Spleen (tissue), 13 donors: ENCODE measurements at regions of chrX and their contacts with region 1.

Region 1: DNA sequence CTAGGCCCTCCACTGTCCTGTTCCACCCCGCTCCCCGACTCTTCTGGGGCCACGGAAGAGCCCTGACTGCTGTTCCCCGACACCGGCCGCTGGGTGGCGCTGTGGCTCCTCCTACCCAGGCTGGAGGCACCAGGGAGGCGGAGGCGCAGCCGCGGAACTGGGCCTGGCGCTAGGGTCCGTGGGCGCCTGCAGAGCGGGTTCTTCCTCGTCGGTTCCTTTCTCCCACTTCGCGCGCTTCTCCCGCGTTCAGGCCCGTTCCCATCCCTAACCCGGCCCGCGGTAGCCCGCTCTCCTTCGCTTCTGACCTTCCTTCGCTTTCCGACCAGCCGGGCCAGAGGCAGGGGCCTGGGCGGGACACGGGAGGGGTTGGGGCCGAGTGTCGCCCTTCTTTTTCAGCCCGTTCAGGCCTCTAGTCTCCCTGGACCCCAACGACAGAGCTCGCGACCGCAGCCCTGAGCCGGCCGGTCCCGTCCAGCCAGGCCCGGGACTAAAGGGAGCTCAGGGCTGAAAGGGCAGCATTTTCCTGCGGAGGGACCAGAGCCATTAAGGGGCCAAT is 34.3 kb downstream of the NALF2 start:
- DNase-seq: peak; percentile 91
- H3K4me3 ChIP-seq: peak overlapping the region in 6 of 8 donors; percentile 13 to 58 (median 22)
- H3K27ac ChIP-seq: no peak overlapping the region
- H3K4me1 ChIP-seq: peaks cover 0 to 14% (median 0%) of the 10 kb centered on the region in 6 donors
- H3K27me3 ChIP-seq: peaks cover 0 to 12% (median 0%) of the 10 kb centered on the region in 7 donors
- CTCF ChIP-seq: peak; percentile 44 to 79 (median 73)
- POLR2A ChIP-seq: no peak

Region 2: GRCh38 chrX:69615779-69616456 is 77.5 kb after region 1 on chrX and contains the start of gene EDA:
- intact Hi-C with region 1: loop called (anchors 10 kb)
- DNase-seq: peak; percentile 85
- H3K4me3 ChIP-seq: peak within 1 kb of the TSS; percentile 23 to 75 (median 41)
- H3K27ac ChIP-seq: no peak within 1 kb of the TSS
- H3K4me1 ChIP-seq: peaks cover 0 to 9% (median 0%) of the 10 kb centered on the region in 6 donors
- H3K27me3 ChIP-seq: peaks cover 0 to 31% (median 17%) of the 10 kb centered on the region in 7 donors
- CTCF ChIP-seq: no peak
- POLR2A ChIP-seq: no peak
- total RNA-seq, gene EDA: 3.1 to 7.2 (median 3.6) TPM

Region 3: DNA sequence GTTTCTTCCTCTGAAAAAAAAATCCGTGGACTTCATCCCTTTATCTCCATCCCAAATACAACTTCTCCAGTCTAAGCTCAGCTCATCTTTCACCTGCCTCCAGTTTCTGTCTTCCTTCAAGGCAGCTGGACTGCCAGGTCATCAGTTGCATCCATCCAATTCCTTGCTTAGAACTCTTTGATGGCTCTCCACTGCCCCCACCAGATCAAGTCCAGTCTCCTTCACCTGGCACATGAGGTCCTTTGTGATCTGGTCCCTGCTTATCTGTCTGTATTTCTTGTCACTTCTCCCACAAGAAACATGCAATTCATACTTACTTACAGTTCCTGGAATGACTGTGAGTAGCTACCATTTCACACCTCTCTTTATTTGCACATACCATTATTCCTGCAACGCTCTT is 557.7 kb after region 1 on chrX:
- intact Hi-C with region 1: loop called (anchors 10 kb)
- DNase-seq: no peak
- H3K4me3 ChIP-seq: no peak overlapping the region
- H3K27ac ChIP-seq: no peak overlapping the region
- H3K4me1 ChIP-seq: no peaks in the 10 kb centered on the region
- H3K27me3 ChIP-seq: peaks cover 0 to 17% (median 0%) of the 10 kb centered on the region in 7 donors
- CTCF ChIP-seq: no peak
- POLR2A ChIP-seq: no peak